ENCODE measurements at regions of chr2 and their contacts with region 1.

Region 1: GRCh38 chr2:157876066-157876787 is at the start of gene ACVR1:
- DNase-seq: peak; percentile 92
- H3K4me3 Mint-ChIP-seq: peak within 1 kb of the TSS; percentile 89
- H3K27ac Mint-ChIP-seq: peak within 1 kb of the TSS; percentile 88
- H3K4me1 Mint-ChIP-seq: peaks cover 56% of the 10 kb centered on the region
- H3K27me3 Mint-ChIP-seq: no peaks in the 10 kb centered on the region
- total RNA-seq, gene ACVR1: 24.8 to 25.0 TPM

Region 2: GRCh38 chr2:157572725-157573124 is 303.5 kb before region 1 on chr2:
- CTCF ChIA-PET with region 1: no interaction called
- POLR2A ChIA-PET with region 1: no interaction called
- intact Hi-C with region 1: no loop called
- DNase-seq: no peak
- H3K4me3 Mint-ChIP-seq: no peak overlapping the region
- H3K27ac Mint-ChIP-seq: no peak overlapping the region
- H3K4me1 Mint-ChIP-seq: no peaks in the 10 kb centered on the region
- H3K27me3 Mint-ChIP-seq: no peaks in the 10 kb centered on the region

Region 3: GRCh38 chr2:157784169-157784822 is 91.9 kb before region 1 on chr2:
- CTCF ChIA-PET with region 1: interaction called, 3 read pairs
- POLR2A ChIA-PET with region 1: no interaction called
- intact Hi-C with region 1: loop called (anchors 1 kb)
- DNase-seq: peak; percentile 26
- H3K4me3 Mint-ChIP-seq: no peak overlapping the region
- H3K27ac Mint-ChIP-seq: peak overlapping the region; percentile 61
- H3K4me1 Mint-ChIP-seq: peaks cover 45% of the 10 kb centered on the region
- H3K27me3 Mint-ChIP-seq: no peaks in the 10 kb centered on the region

Region 4: DNA sequence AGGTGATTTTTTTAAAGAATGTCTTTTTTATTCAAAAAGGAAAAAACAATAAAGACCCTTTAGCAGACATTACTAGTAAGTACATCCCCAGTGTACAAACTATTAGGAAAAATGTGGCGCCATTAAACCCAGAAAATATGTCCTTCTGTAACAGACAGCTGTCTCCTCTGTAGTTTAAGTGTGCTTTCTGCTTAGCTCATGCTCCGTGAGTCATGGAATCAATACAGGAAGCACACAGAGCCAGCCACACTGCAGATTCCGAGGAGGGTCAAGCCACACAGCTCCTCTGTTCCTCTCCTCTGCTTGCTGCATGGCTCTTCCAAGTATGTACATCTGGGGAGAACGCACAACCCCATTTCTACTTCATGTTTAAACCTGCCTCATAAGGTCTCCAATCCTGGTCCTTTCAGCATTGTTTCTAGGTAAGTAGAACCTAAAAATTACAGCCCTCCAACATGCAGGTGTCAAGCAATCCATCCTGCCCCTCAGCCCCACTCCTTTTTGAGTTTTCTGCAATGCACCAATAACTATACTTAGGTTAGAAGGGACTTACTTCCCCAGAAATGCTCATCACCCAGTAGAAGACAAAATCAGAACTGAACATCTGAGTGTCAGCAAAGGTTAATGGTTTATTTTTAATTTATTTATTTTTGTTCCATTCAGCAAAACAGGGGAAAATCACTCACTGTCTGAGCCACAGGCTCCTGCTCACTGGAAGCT is 37.6 kb before region 1 on chr2:
- CTCF ChIA-PET with region 1: interaction called, 6 read pairs
- POLR2A ChIA-PET with region 1: interaction called, 6 read pairs
- intact Hi-C with region 1: loop called (anchors 5 kb)
- DNase-seq: peak; percentile 34
- H3K4me3 Mint-ChIP-seq: no peak overlapping the region
- H3K27ac Mint-ChIP-seq: peak overlapping the region; percentile 14
- H3K4me1 Mint-ChIP-seq: peaks cover 44% of the 10 kb centered on the region
- H3K27me3 Mint-ChIP-seq: no peaks in the 10 kb centered on the region

Region 5: DNA sequence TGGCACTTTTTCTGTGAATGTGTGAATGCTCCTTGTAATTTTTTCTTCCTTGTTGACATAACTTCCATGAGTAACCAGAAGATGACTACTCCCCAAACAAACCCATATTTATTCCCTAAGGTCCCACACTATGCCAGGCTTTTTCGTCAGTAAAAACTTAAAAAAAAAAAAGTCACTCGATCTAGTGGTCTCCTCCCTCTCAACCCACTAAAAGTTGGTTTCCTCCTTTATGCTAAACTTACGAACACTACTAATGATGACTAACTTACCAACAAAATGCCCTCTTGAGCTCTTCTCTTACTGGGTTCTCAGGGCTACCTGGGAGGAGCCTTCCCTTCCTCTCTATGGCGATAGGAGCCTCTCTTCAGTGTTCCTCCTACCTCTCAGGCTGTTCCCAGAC is 18.3 kb before region 1 on chr2:
- CTCF ChIA-PET with region 1: interaction called, 7 read pairs
- POLR2A ChIA-PET with region 1: interaction called, 10 read pairs
- intact Hi-C with region 1: loop called (anchors 2 kb)
- DNase-seq: no peak
- H3K4me3 Mint-ChIP-seq: no peak overlapping the region
- H3K27ac Mint-ChIP-seq: no peak overlapping the region
- H3K4me1 Mint-ChIP-seq: peaks cover 45% of the 10 kb centered on the region
- H3K27me3 Mint-ChIP-seq: no peaks in the 10 kb centered on the region

Region 6: DNA sequence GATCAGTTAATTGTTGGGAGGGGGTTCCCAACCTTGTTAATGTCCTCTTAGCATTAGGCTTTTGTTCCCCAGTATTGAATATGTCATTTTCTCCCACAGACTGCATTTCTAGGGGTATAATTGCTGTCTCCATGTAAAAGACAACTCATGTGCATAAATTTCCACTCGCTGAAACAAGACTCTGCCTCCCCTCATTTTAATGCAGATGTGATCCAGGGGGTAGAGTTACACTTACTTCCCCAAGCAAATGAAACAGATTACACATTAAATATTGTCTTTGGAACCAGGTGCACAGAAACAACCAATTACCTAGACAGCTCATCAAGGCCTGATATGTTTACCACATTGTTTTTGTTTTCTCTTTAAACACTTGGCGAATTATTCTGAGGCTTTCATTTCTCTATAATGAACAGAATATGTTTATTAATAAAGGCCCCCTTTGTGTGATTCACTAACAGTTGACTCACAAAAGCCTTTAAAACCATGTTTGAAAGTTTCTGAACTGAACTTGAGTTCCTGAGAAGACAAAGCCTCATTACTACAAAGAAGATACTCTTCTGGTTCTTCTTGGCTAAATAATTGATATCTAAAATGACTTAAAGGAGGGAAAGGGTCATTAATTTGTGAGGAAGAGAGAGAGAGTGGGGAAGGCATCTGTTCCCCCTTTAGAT is 14.9 kb after region 1 on chr2:
- CTCF ChIA-PET with region 1: interaction called, 20 read pairs
- POLR2A ChIA-PET with region 1: interaction called, 15 read pairs
- intact Hi-C with region 1: no loop called
- DNase-seq: no peak
- H3K4me3 Mint-ChIP-seq: peak overlapping the region; percentile 7
- H3K27ac Mint-ChIP-seq: peak overlapping the region; percentile 85
- H3K4me1 Mint-ChIP-seq: peaks cover 63% of the 10 kb centered on the region
- H3K27me3 Mint-ChIP-seq: no peaks in the 10 kb centered on the region